ENCODE measurements at regions of chr6 and their contacts with region 1.

Region 1: GRCh38 chr6:16562498-16562897 is 198.8 kb downstream of the ATXN1 start:
- DNase-seq: peak; percentile 26
- H3K4me3 ChIP-seq: no peak overlapping the region
- H3K27ac ChIP-seq: no peak overlapping the region
- H3K4me1 ChIP-seq: no peaks in the 10 kb centered on the region
- H3K27me3 ChIP-seq: no peaks in the 10 kb centered on the region
- CTCF ChIP-seq: no peak

Region 2: DNA sequence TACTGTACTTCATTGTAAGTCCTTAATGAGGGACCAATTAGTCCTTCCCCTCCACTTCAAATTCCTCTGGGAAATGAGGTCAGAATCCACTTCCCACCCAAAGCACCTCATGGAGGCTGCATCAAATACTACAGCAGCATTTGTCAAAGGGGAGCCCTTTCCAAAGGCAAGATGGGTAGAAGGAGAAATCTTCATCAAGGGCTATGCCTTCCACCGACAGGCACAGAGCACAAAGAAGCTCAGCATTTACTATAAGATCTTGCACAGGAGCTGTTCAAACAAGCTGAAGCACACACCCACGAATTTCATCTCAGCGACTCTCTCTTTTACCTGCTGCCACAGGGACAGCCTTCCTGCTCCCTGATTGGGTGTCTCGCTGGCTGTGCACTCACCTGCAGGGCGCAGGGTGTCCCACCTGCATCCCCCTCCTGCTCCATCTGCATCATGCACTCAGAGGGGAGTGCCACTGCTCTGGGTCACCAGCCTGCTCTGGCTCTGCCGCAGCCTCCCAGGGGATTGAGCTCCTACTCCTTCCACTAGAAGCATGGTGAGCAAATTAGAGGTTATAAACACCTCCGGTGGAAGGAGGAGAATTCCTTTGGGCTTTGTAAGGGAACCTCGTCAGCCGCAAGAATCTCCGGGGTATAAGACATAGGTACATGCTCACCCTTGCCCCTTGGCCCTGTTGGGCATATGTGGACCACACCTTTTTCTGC is 34.3 kb after region 1 on chr6:
- CTCF ChIA-PET with region 1: no interaction called
- dilution Hi-C with region 1: loop called (anchors 5 kb)
- in situ Hi-C with region 1: no loop called
- intact Hi-C with region 1: no loop called
- DNase-seq: peak; percentile 82
- H3K4me3 ChIP-seq: peak overlapping the region in 2 of 3 experiments; percentile 12 to 41
- H3K27ac ChIP-seq: peak overlapping the region; percentile 59
- H3K4me1 ChIP-seq: peaks cover 38% of the 10 kb centered on the region
- H3K27me3 ChIP-seq: no peaks in the 10 kb centered on the region
- CTCF ChIP-seq: no peak

Measured in mammary epithelial cell (primary cell).